ENCODE measurements at regions of chr6 and their contacts with region 1.

Region 1: GRCh38 chr6:157235600-157236039 is 87.7 kb downstream of the TMEM242 start:
- DNase-seq: peak; percentile 69
- H3K4me3 Mint-ChIP-seq: peak overlapping the region; percentile 87
- H3K27ac Mint-ChIP-seq: no peak overlapping the region
- H3K4me1 Mint-ChIP-seq: peaks cover 14% of the 10 kb centered on the region
- H3K27me3 Mint-ChIP-seq: peaks cover 19% of the 10 kb centered on the region

Region 2: DNA sequence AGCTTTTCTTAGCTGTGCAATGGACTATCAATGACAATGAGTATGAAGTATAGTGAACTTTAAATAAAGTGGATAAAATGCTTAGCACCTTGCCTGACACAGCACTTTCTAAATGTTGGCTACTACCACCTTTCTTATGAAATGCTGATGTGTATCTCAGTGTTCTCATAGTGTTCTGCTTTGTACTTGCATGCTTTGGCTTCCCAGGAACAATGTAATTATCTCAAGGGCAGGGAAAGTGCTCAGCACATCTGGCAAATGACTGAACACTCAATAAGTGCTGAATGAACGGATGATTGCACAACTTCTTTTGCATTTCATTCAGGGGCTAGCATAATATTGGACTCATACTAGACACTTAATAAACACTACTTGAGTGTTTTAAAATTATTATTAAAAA is 1751.8 kb before region 1 on chr6:
- CTCF ChIA-PET with region 1: no interaction called
- POLR2A ChIA-PET with region 1: no interaction called
- intact Hi-C with region 1: no loop called
- DNase-seq: no peak
- H3K4me3 Mint-ChIP-seq: no peak overlapping the region
- H3K27ac Mint-ChIP-seq: no peak overlapping the region
- H3K4me1 Mint-ChIP-seq: peaks cover 4% of the 10 kb centered on the region
- H3K27me3 Mint-ChIP-seq: no peaks in the 10 kb centered on the region

Region 3: DNA sequence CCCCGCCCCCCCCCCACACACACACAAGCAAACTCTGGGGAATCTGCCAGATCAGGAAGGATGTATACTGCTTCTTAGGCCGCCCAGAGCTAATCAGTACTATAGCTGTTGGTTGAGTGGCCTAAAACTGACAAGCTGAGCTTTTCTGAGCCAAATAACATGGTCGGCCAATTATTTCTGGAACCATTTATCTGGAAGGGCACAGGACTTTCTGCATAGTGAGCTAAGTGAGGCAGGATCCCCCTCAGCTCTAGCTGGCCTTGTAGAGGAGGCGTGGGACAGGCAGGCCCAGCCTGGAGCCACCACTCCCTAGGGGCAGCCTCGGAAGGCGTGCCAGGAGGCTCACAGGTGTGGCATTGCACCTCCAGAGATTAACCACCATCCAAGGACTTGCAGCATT is 112.4 kb before region 1 on chr6:
- CTCF ChIA-PET with region 1: no interaction called
- POLR2A ChIA-PET with region 1: no interaction called
- intact Hi-C with region 1: no loop called
- DNase-seq: no peak
- H3K4me3 Mint-ChIP-seq: no peak overlapping the region
- H3K27ac Mint-ChIP-seq: no peak overlapping the region
- H3K4me1 Mint-ChIP-seq: no peaks in the 10 kb centered on the region
- H3K27me3 Mint-ChIP-seq: no peaks in the 10 kb centered on the region

Region 4: GRCh38 chr6:157221007-157221816 is 14.4 kb before region 1 on chr6:
- CTCF ChIA-PET with region 1: interaction called, 24 read pairs
- POLR2A ChIA-PET with region 1: interaction called, 4 read pairs
- intact Hi-C with region 1: loop called (anchors 2 kb)
- DNase-seq: peak; percentile 92
- H3K4me3 Mint-ChIP-seq: peak overlapping the region; percentile 65
- H3K27ac Mint-ChIP-seq: peak overlapping the region; percentile 64
- H3K4me1 Mint-ChIP-seq: peaks cover 32% of the 10 kb centered on the region
- H3K27me3 Mint-ChIP-seq: no peaks in the 10 kb centered on the region

Region 5: GRCh38 chr6:157253017-157253416 is 17.4 kb after region 1 on chr6:
- CTCF ChIA-PET with region 1: interaction called, 12 read pairs
- POLR2A ChIA-PET with region 1: no interaction called
- intact Hi-C with region 1: no loop called
- DNase-seq: no peak
- H3K4me3 Mint-ChIP-seq: no peak overlapping the region
- H3K27ac Mint-ChIP-seq: no peak overlapping the region
- H3K4me1 Mint-ChIP-seq: peaks cover 2% of the 10 kb centered on the region
- H3K27me3 Mint-ChIP-seq: no peaks in the 10 kb centered on the region

Region 6: GRCh38 chr6:157274471-157275226 is 39.0 kb after region 1 on chr6:
- CTCF ChIA-PET with region 1: interaction called, 16 read pairs
- POLR2A ChIA-PET with region 1: interaction called, 3 read pairs
- intact Hi-C with region 1: loop called (anchors 2 kb)
- DNase-seq: peak; percentile 90
- H3K4me3 Mint-ChIP-seq: peak overlapping the region; percentile 76
- H3K27ac Mint-ChIP-seq: peak overlapping the region; percentile 89
- H3K4me1 Mint-ChIP-seq: peaks cover 5% of the 10 kb centered on the region
- H3K27me3 Mint-ChIP-seq: no peaks in the 10 kb centered on the region